CD8-positive, alpha-beta T cell (primary cell): ENCODE measurements at regions of chr21 and their contacts with region 1.

Region 1: GRCh38 chr21:36113647-36114428 is 21.0 kb upstream of the CBR3 start:
- DNase-seq: peak in 6 of 9 experiments; percentile 26 to 90 (median 62)
- ATAC-seq: peak; percentile 82
- H3K4me3 ChIP-seq: peak overlapping the region; percentile 51 to 71
- H3K4me3 Mint-ChIP-seq: peak overlapping the region; percentile 81
- H3K27ac ChIP-seq: peak overlapping the region; percentile 57 to 61
- H3K27ac Mint-ChIP-seq: peak overlapping the region; percentile 91
- H3K4me1 ChIP-seq: peaks cover 37% of the 10 kb centered on the region
- H3K4me1 Mint-ChIP-seq: peaks cover 32% of the 10 kb centered on the region
- H3K27me3 ChIP-seq: no peaks in the 10 kb centered on the region
- H3K27me3 Mint-ChIP-seq: no peaks in the 10 kb centered on the region
- CTCF ChIP-seq: no peak

Region 2: DNA sequence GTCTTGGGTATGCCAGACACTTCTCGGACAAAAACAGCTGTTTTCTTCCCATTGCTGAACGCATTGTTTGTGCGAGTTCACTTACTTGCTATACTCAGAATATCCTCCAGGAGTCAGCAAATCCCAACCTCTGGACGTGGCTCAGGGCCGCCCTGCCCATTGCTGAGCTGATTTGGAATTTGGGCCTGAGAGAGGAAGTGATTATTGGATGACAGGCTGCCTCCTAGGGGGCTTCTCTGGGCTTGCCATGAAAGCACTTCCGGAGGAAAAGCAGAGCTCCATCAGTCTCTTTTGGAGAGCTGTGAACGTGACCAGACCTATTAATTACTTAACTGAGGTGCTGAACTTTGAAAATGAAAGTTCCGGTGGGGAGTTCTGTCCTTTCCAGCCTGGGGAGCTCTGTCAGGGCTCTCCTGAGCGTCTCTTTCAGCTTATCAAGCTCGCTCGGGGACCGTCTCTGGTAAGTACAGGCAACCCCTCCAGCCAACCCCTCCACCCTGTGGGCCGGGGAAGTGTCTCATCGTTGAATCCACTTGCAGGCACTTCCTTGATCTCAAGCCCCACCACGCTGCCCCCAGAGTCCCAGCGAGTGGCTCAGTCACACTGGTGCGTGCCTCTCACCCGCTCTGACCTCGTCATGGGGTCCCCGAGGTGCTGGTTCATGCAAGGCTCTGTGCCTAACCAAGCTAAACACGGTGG is 1368.1 kb before region 1 on chr21:
- CTCF ChIA-PET with region 1: interaction called, 3 read pairs
- POLR2A ChIA-PET with region 1: no interaction called
- intact Hi-C with region 1: loop called in 1 of 2 experiments (anchors 5 kb)
- DNase-seq: peak; percentile 16 to 71 (median 44)
- ATAC-seq: peak; percentile 80
- H3K4me3 ChIP-seq: peak overlapping the region in 1 of 2 experiments; percentile 13
- H3K4me3 Mint-ChIP-seq: peak overlapping the region; percentile 71
- H3K27ac ChIP-seq: no peak overlapping the region
- H3K27ac Mint-ChIP-seq: no peak overlapping the region
- H3K4me1 ChIP-seq: peaks cover 4% of the 10 kb centered on the region
- H3K4me1 Mint-ChIP-seq: peaks cover 4% of the 10 kb centered on the region
- H3K27me3 ChIP-seq: no peaks in the 10 kb centered on the region
- H3K27me3 Mint-ChIP-seq: peaks cover 4% of the 10 kb centered on the region
- CTCF ChIP-seq: peak; percentile 89

Region 3: GRCh38 chr21:36060159-36060921 is 53.5 kb before region 1 on chr21 and contains the start of gene SETD4:
- CTCF ChIA-PET with region 1: interaction called, 7 read pairs
- POLR2A ChIA-PET with region 1: interaction called, 13 read pairs
- intact Hi-C with region 1: loop called (anchors 1 to 2 kb)
- DNase-seq: peak; percentile 80 to 97 (median 92)
- ATAC-seq: peak; percentile 87
- H3K4me3 ChIP-seq: peak within 1 kb of the TSS; percentile 88 to 99
- H3K4me3 Mint-ChIP-seq: peak within 1 kb of the TSS; percentile 96
- H3K27ac ChIP-seq: peak within 1 kb of the TSS; percentile 69 to 90
- H3K27ac Mint-ChIP-seq: peak within 1 kb of the TSS; percentile 98
- H3K4me1 ChIP-seq: peaks cover 4% of the 10 kb centered on the region
- H3K4me1 Mint-ChIP-seq: peaks cover 27% of the 10 kb centered on the region
- H3K27me3 ChIP-seq: no peaks in the 10 kb centered on the region
- H3K27me3 Mint-ChIP-seq: no peaks in the 10 kb centered on the region
- CTCF ChIP-seq: no peak
- total RNA-seq, gene SETD4: 13.9 to 15.4 TPM

Region 4: GRCh38 chr21:36125512-36126222 is 11.8 kb after region 1 on chr21:
- CTCF ChIA-PET with region 1: interaction called, 23 read pairs
- POLR2A ChIA-PET with region 1: interaction called, 3 read pairs
- intact Hi-C with region 1: no loop called
- DNase-seq: peak in 7 of 9 experiments; percentile 39 to 78 (median 64)
- ATAC-seq: peak; percentile 71
- H3K4me3 ChIP-seq: no peak overlapping the region
- H3K4me3 Mint-ChIP-seq: no peak overlapping the region
- H3K27ac ChIP-seq: no peak overlapping the region
- H3K27ac Mint-ChIP-seq: no peak overlapping the region
- H3K4me1 ChIP-seq: peaks cover 2% of the 10 kb centered on the region
- H3K4me1 Mint-ChIP-seq: peaks cover 18% of the 10 kb centered on the region
- H3K27me3 ChIP-seq: no peaks in the 10 kb centered on the region
- H3K27me3 Mint-ChIP-seq: no peaks in the 10 kb centered on the region
- CTCF ChIP-seq: peak; percentile 96

Region 5: DNA sequence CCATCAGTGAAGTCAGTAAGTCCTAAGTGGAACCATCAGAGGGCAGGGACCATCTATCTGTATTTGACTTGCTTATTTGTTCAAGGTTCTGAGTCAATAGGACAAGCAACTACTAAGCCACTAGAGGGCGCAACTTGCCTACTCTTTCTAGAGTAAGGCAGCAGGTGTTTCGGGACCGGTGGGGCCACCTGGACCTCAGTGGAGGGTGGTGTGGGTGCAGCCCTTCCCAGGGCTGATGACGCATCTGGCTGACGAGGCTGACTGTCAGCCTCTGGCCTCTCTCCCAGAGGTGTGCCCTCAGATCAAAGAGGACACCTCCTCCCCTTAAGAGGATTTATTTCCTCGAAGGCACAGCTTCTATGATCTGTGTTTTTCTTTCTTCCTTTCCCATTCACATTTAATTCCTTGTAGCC is 27.7 kb after region 1 on chr21:
- CTCF ChIA-PET with region 1: interaction called, 16 read pairs
- POLR2A ChIA-PET with region 1: interaction called, 3 read pairs
- intact Hi-C with region 1: no loop called
- DNase-seq: peak; percentile 68 to 93 (median 86)
- ATAC-seq: peak; percentile 93
- H3K4me3 ChIP-seq: no peak overlapping the region
- H3K4me3 Mint-ChIP-seq: no peak overlapping the region
- H3K27ac ChIP-seq: peak overlapping the region; percentile 1 to 2
- H3K27ac Mint-ChIP-seq: peak overlapping the region; percentile 28
- H3K4me1 ChIP-seq: peaks cover 25% of the 10 kb centered on the region
- H3K4me1 Mint-ChIP-seq: peaks cover 27% of the 10 kb centered on the region
- H3K27me3 ChIP-seq: no peaks in the 10 kb centered on the region
- H3K27me3 Mint-ChIP-seq: no peaks in the 10 kb centered on the region
- CTCF ChIP-seq: peak; percentile 85

Region 6: DNA sequence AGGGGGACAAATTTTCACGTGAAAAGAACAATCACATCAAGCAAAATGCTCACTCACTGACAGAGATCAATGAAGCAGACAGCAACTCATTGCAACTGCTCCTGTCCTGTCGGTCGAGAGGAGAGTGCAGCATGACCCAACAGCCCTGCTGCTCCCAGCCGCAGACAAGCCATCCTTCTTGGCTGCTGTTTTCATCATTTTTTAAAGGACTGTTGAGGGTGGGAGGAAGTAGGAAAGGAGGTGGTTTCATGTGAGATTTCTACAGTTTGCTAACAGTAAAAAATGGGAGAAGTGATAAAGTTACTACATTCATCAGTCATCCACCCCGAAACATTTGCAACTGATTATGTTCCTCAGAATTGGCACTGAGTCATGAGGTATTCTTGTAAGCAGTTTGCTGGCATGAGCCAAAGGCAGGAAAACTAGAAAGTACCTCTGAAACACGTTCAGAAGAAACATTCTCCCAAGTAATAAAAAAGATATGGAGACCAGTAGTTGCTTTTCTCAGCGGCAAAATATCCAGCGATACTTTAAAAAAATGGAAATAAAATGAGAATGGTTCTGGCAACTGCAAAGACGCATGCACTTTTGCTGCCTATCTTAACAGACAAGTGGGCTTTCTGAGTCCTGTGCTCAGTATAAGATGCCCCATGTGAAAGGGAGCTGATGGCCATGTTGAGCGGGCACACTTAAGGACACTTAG is 438.0 kb after region 1 on chr21:
- CTCF ChIA-PET with region 1: no interaction called
- POLR2A ChIA-PET with region 1: no interaction called
- intact Hi-C with region 1: no loop called
- DNase-seq: no peak
- ATAC-seq: no peak
- H3K4me3 ChIP-seq: no peak overlapping the region
- H3K4me3 Mint-ChIP-seq: no peak overlapping the region
- H3K27ac ChIP-seq: no peak overlapping the region
- H3K27ac Mint-ChIP-seq: no peak overlapping the region
- H3K4me1 ChIP-seq: no peaks in the 10 kb centered on the region
- H3K4me1 Mint-ChIP-seq: no peaks in the 10 kb centered on the region
- H3K27me3 ChIP-seq: no peaks in the 10 kb centered on the region
- H3K27me3 Mint-ChIP-seq: peaks cover 13% of the 10 kb centered on the region
- CTCF ChIP-seq: no peak